ENCODE measurements at regions of chr7 and their contacts with region 1.

Region 1: GRCh38 chr7:80611775-80612174 is 26.7 kb upstream of the CD36 start:
- DNase-seq: no peak
- H3K4me3 ChIP-seq: no peak overlapping the region
- H3K4me3 Mint-ChIP-seq: no peak overlapping the region
- H3K27ac Mint-ChIP-seq: no peak overlapping the region
- H3K4me1 ChIP-seq: 0 out of 2 replicates have a peak, but pooled peaks cover 4% of the 10 kb centered on the region
- H3K4me1 Mint-ChIP-seq: peaks cover 23% of the 10 kb centered on the region
- H3K27me3 ChIP-seq: no peaks in the 10 kb centered on the region
- H3K27me3 Mint-ChIP-seq: no peaks in the 10 kb centered on the region
- CTCF ChIP-seq: no peak

Region 2: GRCh38 chr7:80517282-80517747 is 94.5 kb before region 1 on chr7:
- CTCF ChIA-PET with region 1: no interaction called
- POLR2A ChIA-PET with region 1: no interaction called
- intact Hi-C with region 1: loop called (anchors 5 kb)
- DNase-seq: no peak
- H3K4me3 ChIP-seq: no peak overlapping the region
- H3K4me3 Mint-ChIP-seq: no peak overlapping the region
- H3K27ac Mint-ChIP-seq: no peak overlapping the region
- H3K4me1 ChIP-seq: no peaks in the 10 kb centered on the region
- H3K4me1 Mint-ChIP-seq: peaks cover 5% of the 10 kb centered on the region
- H3K27me3 ChIP-seq: no peaks in the 10 kb centered on the region
- H3K27me3 Mint-ChIP-seq: no peaks in the 10 kb centered on the region
- CTCF ChIP-seq: no peak

Region 3: GRCh38 chr7:80659120-80660055 is 47.6 kb after region 1 on chr7:
- CTCF ChIA-PET with region 1: no interaction called
- POLR2A ChIA-PET with region 1: no interaction called
- intact Hi-C with region 1: no loop called
- DNase-seq: no peak
- H3K4me3 ChIP-seq: no peak overlapping the region
- H3K4me3 Mint-ChIP-seq: no peak overlapping the region
- H3K27ac Mint-ChIP-seq: no peak overlapping the region
- H3K4me1 ChIP-seq: no peaks in the 10 kb centered on the region
- H3K4me1 Mint-ChIP-seq: no peaks in the 10 kb centered on the region
- H3K27me3 ChIP-seq: no peaks in the 10 kb centered on the region
- H3K27me3 Mint-ChIP-seq: peaks cover 13% of the 10 kb centered on the region
- CTCF ChIP-seq: peak; percentile 25 to 43

Region 4: DNA sequence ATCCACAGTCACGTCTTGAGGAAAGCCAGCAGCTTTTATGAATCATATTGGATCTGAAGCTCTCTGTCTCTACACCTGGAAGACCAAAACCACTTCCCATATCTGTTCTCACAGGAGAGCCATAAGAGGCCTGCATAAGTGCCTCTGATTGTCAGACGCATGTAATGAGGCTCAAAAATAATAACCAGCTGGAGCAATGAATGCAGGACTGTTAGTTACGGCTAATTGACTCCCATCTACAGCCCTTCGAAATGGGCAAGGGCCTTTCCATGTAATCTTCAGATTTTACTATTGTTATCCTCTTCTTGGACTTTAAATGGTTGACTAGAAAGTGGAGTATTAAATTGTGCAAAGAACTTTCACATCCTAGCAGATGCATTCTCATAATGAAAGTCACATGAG is 311.4 kb after region 1 on chr7:
- CTCF ChIA-PET with region 1: no interaction called
- POLR2A ChIA-PET with region 1: no interaction called
- intact Hi-C with region 1: no loop called
- DNase-seq: no peak
- H3K4me3 ChIP-seq: no peak overlapping the region
- H3K4me3 Mint-ChIP-seq: no peak overlapping the region
- H3K27ac Mint-ChIP-seq: no peak overlapping the region
- H3K4me1 ChIP-seq: peaks cover 26% of the 10 kb centered on the region
- H3K4me1 Mint-ChIP-seq: peaks cover 14% of the 10 kb centered on the region
- H3K27me3 ChIP-seq: no peaks in the 10 kb centered on the region
- H3K27me3 Mint-ChIP-seq: no peaks in the 10 kb centered on the region
- CTCF ChIP-seq: no peak